Thyroid gland (tissue), 4 donors: ENCODE measurements at regions of chr22 and their contacts with region 1.

Region 1: GRCh38 chr22:49929208-49930136 is 11.0 kb downstream of the CRELD2 start:
- DNase-seq: peak; percentile 66 to 68
- H3K4me3 ChIP-seq: no peak overlapping the region
- H3K27ac ChIP-seq: no peak overlapping the region
- H3K4me1 ChIP-seq: peaks cover 31 to 56% of the 10 kb centered on the region in 2 donors
- H3K27me3 ChIP-seq: no peaks in the 10 kb centered on the region
- CTCF ChIP-seq: peak in 5 of 6 experiments; percentile 15 to 97 (median 95)
- POLR2A ChIP-seq: no peak

Region 2: GRCh38 chr22:49767355-49768062 is 162.0 kb before region 1 on chr22:
- intact Hi-C with region 1: loop called (anchors 10 kb)
- DNase-seq: no peak
- H3K4me3 ChIP-seq: no peak overlapping the region
- H3K27ac ChIP-seq: no peak overlapping the region
- H3K4me1 ChIP-seq: peaks cover 6 to 11% of the 10 kb centered on the region in 2 donors
- H3K27me3 ChIP-seq: no peaks in the 10 kb centered on the region
- CTCF ChIP-seq: peak in 4 of 6 experiments; percentile 49 to 85 (median 62)
- POLR2A ChIP-seq: no peak

Region 3: GRCh38 chr22:49992921-49993648 is 63.6 kb after region 1 on chr22:
- intact Hi-C with region 1: loop called (anchors 5 kb)
- DNase-seq: peak; percentile 66 to 67
- H3K4me3 ChIP-seq: no peak overlapping the region
- H3K27ac ChIP-seq: no peak overlapping the region
- H3K4me1 ChIP-seq: peaks cover 0 to 8% of the 10 kb centered on the region in 2 donors
- H3K27me3 ChIP-seq: no peaks in the 10 kb centered on the region
- CTCF ChIP-seq: peak; percentile 43 to 74 (median 66)
- POLR2A ChIP-seq: no peak

Region 4: GRCh38 chr22:50030297-50031188 is 101.1 kb after region 1 on chr22:
- intact Hi-C with region 1: loop called (anchors 2 kb)
- DNase-seq: peak; percentile 75 to 81
- H3K4me3 ChIP-seq: no peak overlapping the region
- H3K27ac ChIP-seq: no peak overlapping the region
- H3K4me1 ChIP-seq: peaks cover 9 to 28% of the 10 kb centered on the region in 2 donors
- H3K27me3 ChIP-seq: no peaks in the 10 kb centered on the region
- CTCF ChIP-seq: peak; percentile 72 to 95 (median 87)
- POLR2A ChIP-seq: no peak

Region 5: DNA sequence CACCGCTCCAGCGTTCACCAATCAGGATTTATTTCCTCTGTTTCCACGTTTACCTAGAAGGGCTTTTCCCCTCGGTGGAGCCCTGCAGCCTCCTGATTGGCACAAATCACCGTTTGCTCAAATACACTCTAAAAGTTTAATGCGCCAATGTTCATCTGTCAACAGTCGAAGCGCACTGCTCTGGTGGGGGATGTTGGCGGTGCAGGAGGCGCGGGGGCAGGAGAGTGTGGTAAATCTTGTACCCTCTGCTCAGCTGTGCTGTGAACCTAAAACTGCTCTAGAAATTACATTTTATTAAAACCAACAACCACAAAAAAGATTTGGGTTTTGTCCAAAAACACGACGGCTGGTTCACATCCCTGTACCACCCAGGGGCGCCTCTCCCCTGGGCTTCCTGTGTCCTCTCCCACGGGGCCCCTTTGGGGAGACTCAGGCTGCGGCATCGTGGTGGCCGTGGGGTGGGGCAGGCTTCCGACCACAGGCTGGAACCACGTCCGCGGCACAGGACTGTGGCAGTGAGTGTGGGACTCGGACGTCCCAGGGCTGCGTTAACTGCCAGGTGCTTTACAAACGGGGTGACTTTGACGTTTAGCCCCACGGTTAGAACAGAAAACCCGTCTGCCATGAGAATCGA is 115.1 kb after region 1 on chr22:
- intact Hi-C with region 1: no loop called
- DNase-seq: no peak
- H3K4me3 ChIP-seq: no peak overlapping the region
- H3K27ac ChIP-seq: no peak overlapping the region
- H3K4me1 ChIP-seq: no peaks in the 10 kb centered on the region
- H3K27me3 ChIP-seq: no peaks in the 10 kb centered on the region
- CTCF ChIP-seq: no peak
- POLR2A ChIP-seq: no peak

Region 6: GRCh38 chr22:50209893-50210292 is 280.4 kb after region 1 on chr22:
- intact Hi-C with region 1: loop called (anchors 10 kb)
- DNase-seq: peak; percentile 69 to 74
- H3K4me3 ChIP-seq: no peak overlapping the region
- H3K27ac ChIP-seq: no peak overlapping the region
- H3K4me1 ChIP-seq: no peaks in the 10 kb centered on the region
- H3K27me3 ChIP-seq: no peaks in the 10 kb centered on the region
- CTCF ChIP-seq: peak; percentile 72 to 87 (median 79)
- POLR2A ChIP-seq: no peak